A673 (cell line): ENCODE measurements at regions of chr13 and their contacts with region 1.

Region 1: DNA sequence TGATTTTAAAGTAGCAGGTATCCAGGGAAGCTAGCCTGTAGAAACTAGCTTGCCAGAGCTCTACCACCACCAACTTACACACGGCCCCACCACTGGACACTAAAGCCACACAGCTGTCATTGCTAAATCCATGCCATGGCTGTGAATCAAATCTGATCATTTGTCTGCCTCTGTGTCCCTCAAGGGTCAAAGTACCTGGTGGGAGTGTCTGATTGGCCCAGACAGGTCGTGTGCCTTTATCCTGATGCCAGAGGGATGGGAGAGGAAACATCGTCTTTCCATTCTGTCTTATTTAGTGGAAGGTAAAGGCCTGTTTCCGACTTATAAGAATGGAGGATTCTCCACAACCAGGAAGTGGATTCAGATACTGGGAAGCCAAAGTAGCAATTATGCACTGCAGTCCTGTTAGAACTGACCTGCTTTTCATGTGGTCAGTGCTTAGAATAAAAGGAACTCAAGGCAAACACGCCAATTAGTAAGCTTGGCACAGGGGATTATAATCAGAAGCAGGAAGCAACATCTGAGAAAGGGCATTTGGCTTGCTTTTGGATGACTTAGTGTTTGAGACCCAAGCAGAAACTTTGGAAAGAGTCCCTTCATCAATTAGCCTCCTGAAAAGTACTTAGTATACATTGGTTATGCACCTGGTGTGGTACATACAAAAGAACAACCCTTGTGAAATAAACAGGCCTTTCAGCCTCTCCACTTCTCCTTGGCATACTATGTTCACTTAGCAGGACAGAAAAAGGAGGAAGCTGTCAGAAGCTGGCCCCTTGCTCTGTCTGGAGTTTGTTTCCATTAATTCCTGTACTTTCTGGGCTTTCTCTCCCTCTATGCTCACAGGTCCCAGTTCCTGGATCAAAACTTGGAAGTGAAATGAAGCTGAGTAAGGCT is 192.4 kb downstream of the NUFIP1 start:
- DNase-seq: no peak
- H3K4me3 ChIP-seq: no peak overlapping the region
- H3K27ac ChIP-seq: no peak overlapping the region
- H3K4me1 ChIP-seq: no peaks in the 10 kb centered on the region
- H3K27me3 ChIP-seq: no peaks in the 10 kb centered on the region
- CTCF ChIP-seq: no peak

Region 2: DNA sequence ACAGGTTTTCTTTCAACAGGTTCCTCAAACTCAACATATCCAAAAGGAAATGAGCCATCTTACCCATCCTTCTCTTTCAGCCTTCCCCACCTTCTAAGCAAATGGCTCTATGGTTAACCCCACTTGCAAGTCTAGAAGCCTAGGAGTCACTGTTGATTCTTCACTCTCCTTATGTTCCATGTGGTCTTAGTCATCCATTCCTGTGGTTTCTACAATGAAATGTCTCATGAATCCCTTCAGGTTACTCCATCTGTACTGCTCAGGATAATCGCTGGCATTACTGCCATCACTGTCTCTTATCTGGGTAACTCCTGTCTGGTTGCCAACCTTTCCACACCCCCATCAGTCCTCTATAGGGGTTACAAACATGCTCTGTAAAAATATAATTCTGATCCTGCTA is 1391.4 kb before region 1 on chr13:
- CTCF ChIA-PET with region 1: no interaction called
- POLR2A ChIA-PET with region 1: no interaction called
- intact Hi-C with region 1: no loop called
- DNase-seq: no peak
- H3K4me3 ChIP-seq: no peak overlapping the region
- H3K27ac ChIP-seq: no peak overlapping the region
- H3K4me1 ChIP-seq: no peaks in the 10 kb centered on the region
- H3K27me3 ChIP-seq: no peaks in the 10 kb centered on the region
- CTCF ChIP-seq: no peak

Region 3: DNA sequence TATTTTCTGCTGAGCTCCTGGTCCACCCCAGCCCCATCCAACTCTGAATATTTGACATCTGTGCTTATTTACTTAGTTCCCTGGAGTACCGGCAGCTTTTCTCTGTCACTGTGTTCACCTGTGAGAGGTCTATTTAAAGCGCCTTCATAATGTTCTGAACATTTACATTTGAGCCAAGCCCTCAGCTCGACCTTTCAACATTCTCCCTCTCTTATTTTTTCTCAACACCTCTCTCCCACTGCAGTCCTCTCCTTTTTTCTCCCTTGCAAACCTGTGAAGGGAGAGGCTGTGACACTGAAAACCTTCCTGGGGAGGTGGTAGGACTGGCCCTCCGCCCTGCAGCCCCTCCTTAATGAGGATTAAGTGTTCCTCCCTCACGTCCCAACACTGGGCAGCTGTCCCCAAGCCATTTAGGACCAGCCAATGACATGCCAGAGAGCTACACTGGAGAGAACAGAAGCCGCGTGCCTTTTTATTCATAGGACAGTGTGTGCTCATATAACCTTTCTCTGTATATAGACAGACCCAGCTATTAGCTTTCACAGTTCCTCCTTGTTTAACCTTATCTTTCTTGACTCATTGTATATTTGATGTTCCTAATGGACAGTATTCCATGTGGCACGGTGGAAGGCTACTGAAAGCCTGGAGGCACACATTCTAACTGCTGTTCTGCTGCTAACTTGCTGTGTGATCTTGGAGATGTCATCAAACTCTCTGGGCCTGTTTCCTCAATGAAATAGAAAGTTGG is 57.6 kb after region 1 on chr13:
- CTCF ChIA-PET with region 1: no interaction called
- POLR2A ChIA-PET with region 1: no interaction called
- intact Hi-C with region 1: loop called (anchors 10 kb)
- DNase-seq: no peak
- H3K4me3 ChIP-seq: no peak overlapping the region
- H3K27ac ChIP-seq: no peak overlapping the region
- H3K4me1 ChIP-seq: no peaks in the 10 kb centered on the region
- H3K27me3 ChIP-seq: no peaks in the 10 kb centered on the region
- CTCF ChIP-seq: no peak